ENCODE measurements at regions of chr1 and their contacts with region 1.

Region 1: DNA sequence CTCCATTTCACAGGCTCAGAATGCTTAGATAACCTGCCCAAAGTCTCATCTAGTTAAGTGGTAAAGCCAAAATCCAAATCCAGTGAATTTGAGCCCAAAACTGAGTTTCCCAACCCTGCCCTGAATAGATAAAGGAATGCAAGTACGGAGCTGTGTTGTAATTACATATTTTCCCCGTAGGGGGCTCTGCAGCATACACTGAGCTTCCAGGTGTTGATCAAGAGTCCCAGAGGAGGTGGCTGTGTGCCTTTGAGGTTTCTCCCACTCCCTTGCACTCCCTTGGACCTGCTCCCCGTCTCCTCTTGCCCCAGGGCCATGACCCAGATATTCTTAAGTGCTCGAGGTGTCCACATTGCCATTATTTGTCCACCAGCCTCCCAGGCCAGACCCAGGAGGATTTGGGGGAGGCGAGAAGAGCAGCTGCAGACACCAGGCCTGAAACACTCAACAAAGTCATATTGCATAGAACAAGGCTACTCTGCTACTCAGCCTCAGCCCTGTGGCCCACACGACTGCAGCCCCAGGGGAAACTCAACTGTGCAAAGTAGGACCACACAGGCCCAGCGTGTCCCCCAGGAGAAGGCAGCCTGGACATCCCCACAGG is 18.4 kb upstream of the LY9 start:
- DNase-seq: peak; percentile 57
- ATAC-seq: peak; percentile 81
- H3K4me3 Mint-ChIP-seq: no peak overlapping the region
- H3K27ac Mint-ChIP-seq: no peak overlapping the region
- H3K4me1 Mint-ChIP-seq: peaks cover 18% of the 10 kb centered on the region
- H3K27me3 Mint-ChIP-seq: peaks cover 4% of the 10 kb centered on the region
- CTCF ChIP-seq: peak; percentile 68

Region 2: GRCh38 chr1:160681067-160681890 is 96.3 kb before region 1 on chr1:
- CTCF ChIA-PET with region 1: interaction called, 26 read pairs
- POLR2A ChIA-PET with region 1: no interaction called
- DNase-seq: peak; percentile 93
- ATAC-seq: peak; percentile 100
- H3K4me3 Mint-ChIP-seq: no peak overlapping the region
- H3K27ac Mint-ChIP-seq: no peak overlapping the region
- H3K4me1 Mint-ChIP-seq: peaks cover 9% of the 10 kb centered on the region
- H3K27me3 Mint-ChIP-seq: no peaks in the 10 kb centered on the region; the same call in 1 of the 2 replicates
- CTCF ChIP-seq: peak; percentile 86

Region 3: DNA sequence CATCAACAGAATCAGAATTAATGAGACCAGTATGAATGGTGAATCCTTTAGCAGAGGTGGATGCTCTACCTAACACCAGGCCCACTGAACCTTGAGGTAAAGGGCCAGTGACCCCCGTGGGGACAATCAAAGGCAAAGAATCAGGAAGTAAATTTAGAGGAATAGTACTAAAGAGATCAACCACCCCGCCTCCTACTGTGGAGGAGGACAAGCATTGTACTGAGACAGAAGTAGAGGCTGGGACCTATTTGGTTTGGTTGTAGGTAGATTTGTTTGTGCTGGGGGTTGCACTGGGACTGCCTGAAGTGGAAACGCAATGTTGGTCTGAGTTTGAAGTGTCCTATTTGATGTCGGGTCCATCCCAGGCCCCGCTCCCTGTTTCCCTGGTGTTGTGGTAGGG is 75.5 kb before region 1 on chr1:
- CTCF ChIA-PET with region 1: no interaction called
- POLR2A ChIA-PET with region 1: no interaction called
- DNase-seq: no peak
- ATAC-seq: no peak
- H3K4me3 Mint-ChIP-seq: no peak overlapping the region
- H3K27ac Mint-ChIP-seq: no peak overlapping the region
- H3K4me1 Mint-ChIP-seq: peaks cover 22% of the 10 kb centered on the region
- H3K27me3 Mint-ChIP-seq: no peaks in the 10 kb centered on the region
- CTCF ChIP-seq: no peak

Region 4: DNA sequence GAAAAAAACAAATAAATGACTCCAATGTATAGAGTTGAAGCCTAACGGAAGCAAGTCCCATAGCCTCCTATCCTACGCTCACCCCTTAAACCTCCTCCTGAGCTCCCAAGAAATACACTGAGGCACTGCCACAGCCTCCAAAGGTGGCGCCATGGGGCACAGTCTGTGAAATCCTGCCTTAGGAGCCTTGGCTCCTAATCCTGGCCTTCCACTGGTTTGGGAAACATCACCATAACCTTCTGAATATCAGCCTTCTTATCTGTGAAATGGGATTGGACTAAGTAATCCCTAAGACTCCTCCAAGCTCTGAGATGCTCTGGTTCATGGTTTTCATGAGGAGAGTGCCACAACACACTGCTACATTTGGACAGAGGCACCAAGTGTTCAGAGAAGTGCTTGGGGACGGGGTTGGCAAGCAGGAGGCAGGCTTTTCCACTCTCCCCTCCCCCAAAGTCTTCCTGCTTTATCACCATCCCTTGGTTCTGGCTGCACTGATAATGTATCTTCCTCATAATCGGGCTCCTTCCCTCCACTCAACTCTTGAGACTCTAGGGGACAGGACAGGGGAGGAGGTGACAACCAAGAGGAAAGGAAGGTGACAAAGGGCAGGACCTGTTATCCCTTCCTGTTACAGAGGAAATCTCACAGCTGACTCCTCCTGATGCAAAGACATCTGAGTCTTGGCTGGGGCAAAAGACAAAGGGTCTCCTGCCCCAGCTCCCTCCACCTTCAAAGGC is 35.8 kb before region 1 on chr1:
- CTCF ChIA-PET with region 1: interaction called, 20 read pairs
- POLR2A ChIA-PET with region 1: no interaction called
- DNase-seq: peak; percentile 26
- ATAC-seq: peak; percentile 75
- H3K4me3 Mint-ChIP-seq: no peak overlapping the region
- H3K27ac Mint-ChIP-seq: no peak overlapping the region
- H3K4me1 Mint-ChIP-seq: peaks cover 20% of the 10 kb centered on the region
- H3K27me3 Mint-ChIP-seq: 0 out of 2 replicates have a peak, but pooled peaks cover 4% of the 10 kb centered on the region
- CTCF ChIP-seq: no peak

Region 5: GRCh38 chr1:160789702-160790611 is 12.4 kb after region 1 on chr1:
- CTCF ChIA-PET with region 1: interaction called, 15 read pairs
- POLR2A ChIA-PET with region 1: no interaction called
- DNase-seq: no peak
- ATAC-seq: no peak
- H3K4me3 Mint-ChIP-seq: no peak overlapping the region
- H3K27ac Mint-ChIP-seq: no peak overlapping the region
- H3K4me1 Mint-ChIP-seq: no peaks in the 10 kb centered on the region
- H3K27me3 Mint-ChIP-seq: no peaks in the 10 kb centered on the region
- CTCF ChIP-seq: no peak

Region 6: GRCh38 chr1:160807738-160808137 is 30.1 kb after region 1 on chr1:
- CTCF ChIA-PET with region 1: interaction called, 11 read pairs
- POLR2A ChIA-PET with region 1: no interaction called
- DNase-seq: no peak
- ATAC-seq: peak; percentile 80
- H3K4me3 Mint-ChIP-seq: no peak overlapping the region
- H3K27ac Mint-ChIP-seq: no peak overlapping the region
- H3K4me1 Mint-ChIP-seq: peaks cover 20% of the 10 kb centered on the region
- H3K27me3 Mint-ChIP-seq: no peaks in the 10 kb centered on the region; the same call in 1 of the 2 replicates
- CTCF ChIP-seq: no peak

Region 7: GRCh38 chr1:160830321-160831153 is 52.9 kb after region 1 on chr1:
- CTCF ChIA-PET with region 1: interaction called, 17 read pairs
- POLR2A ChIA-PET with region 1: no interaction called
- DNase-seq: peak; percentile 91
- ATAC-seq: peak; percentile 93
- H3K4me3 Mint-ChIP-seq: no peak overlapping the region
- H3K27ac Mint-ChIP-seq: no peak overlapping the region
- H3K4me1 Mint-ChIP-seq: peaks cover 12% of the 10 kb centered on the region
- H3K27me3 Mint-ChIP-seq: peaks cover 11% of the 10 kb centered on the region; the same call in 1 of the 2 replicates
- CTCF ChIP-seq: peak; percentile 76